ENCODE measurements at regions of chr17 and their contacts with region 1.

Region 1: GRCh38 chr17:78186692-78187595 is at the starts of genes AFMID and TK1:
- DNase-seq: peak; percentile 98 to 99 (median 98)
- ATAC-seq: peak; percentile 94
- H3K4me3 ChIP-seq: peak within 1 kb of the TSS; percentile 86
- H3K27ac ChIP-seq: peak within 1 kb of the TSS; percentile 89
- H3K4me1 ChIP-seq: peaks cover 22 to 54% of the 10 kb centered on the region in 2 experiments
- H3K27me3 ChIP-seq: no peaks in the 10 kb centered on the region
- CTCF ChIP-seq: peak; percentile 70 to 82 (median 77)
- EP300 ChIP-seq: no peak
- POLR2A ChIP-seq: peak; percentile 97
- RAD21 ChIP-seq: peak; percentile 25 to 28; a peak in 2 of 4 replicates
- polyA plus RNA-seq, gene AFMID: 80.3 to 188 TPM
- polyA plus RNA-seq, gene TK1: 8.4 to 29.9 TPM

Region 2: GRCh38 chr17:78089576-78090281 is 97.2 kb before region 1 on chr17:
- CTCF ChIA-PET with region 1: no interaction called
- POLR2A ChIA-PET with region 1: interaction called, 4 read pairs
- in situ Hi-C with region 1: no loop called
- intact Hi-C with region 1: loop called (anchors 5 kb)
- DNase-seq: no peak
- ATAC-seq: no peak
- H3K4me3 ChIP-seq: no peak overlapping the region
- H3K27ac ChIP-seq: no peak overlapping the region
- H3K4me1 ChIP-seq: peaks cover 2 to 6% of the 10 kb centered on the region in 2 experiments; a peak in 4 of 5 replicates
- H3K27me3 ChIP-seq: no peaks in the 10 kb centered on the region
- CTCF ChIP-seq: no peak
- EP300 ChIP-seq: no peak
- POLR2A ChIP-seq: no peak
- RAD21 ChIP-seq: no peak

Region 3: GRCh38 chr17:78140169-78140976 is 46.6 kb before region 1 on chr17:
- CTCF ChIA-PET with region 1: no interaction called
- POLR2A ChIA-PET with region 1: interaction called, 23 read pairs
- in situ Hi-C with region 1: no loop called
- intact Hi-C with region 1: loop called (anchors 5 kb)
- DNase-seq: peak; percentile 96 to 99 (median 98)
- ATAC-seq: peak; percentile 85
- H3K4me3 ChIP-seq: peak overlapping the region; percentile 44
- H3K27ac ChIP-seq: peak overlapping the region; percentile 79
- H3K4me1 ChIP-seq: peaks cover 75 to 99% of the 10 kb centered on the region in 2 experiments
- H3K27me3 ChIP-seq: no peaks in the 10 kb centered on the region
- CTCF ChIP-seq: no peak
- EP300 ChIP-seq: no peak
- POLR2A ChIP-seq: peak; percentile 80
- RAD21 ChIP-seq: no peak

Region 4: GRCh38 chr17:78176548-78177025 is 10.4 kb before region 1 on chr17:
- CTCF ChIA-PET with region 1: interaction called, 4 read pairs
- POLR2A ChIA-PET with region 1: interaction called, 27 read pairs
- in situ Hi-C with region 1: no loop called
- intact Hi-C with region 1: no loop called
- DNase-seq: peak; percentile 71 to 86 (median 76)
- ATAC-seq: peak; percentile 90
- H3K4me3 ChIP-seq: no peak overlapping the region
- H3K27ac ChIP-seq: peak overlapping the region; percentile 31; the same call in 1 of the 3 replicates
- H3K4me1 ChIP-seq: peaks cover 7 to 43% of the 10 kb centered on the region in 2 experiments
- H3K27me3 ChIP-seq: no peaks in the 10 kb centered on the region
- CTCF ChIP-seq: peak; percentile 92 to 97 (median 94)
- EP300 ChIP-seq: no peak
- POLR2A ChIP-seq: peak; percentile 53
- RAD21 ChIP-seq: peak; percentile 72 to 86

Region 5: DNA sequence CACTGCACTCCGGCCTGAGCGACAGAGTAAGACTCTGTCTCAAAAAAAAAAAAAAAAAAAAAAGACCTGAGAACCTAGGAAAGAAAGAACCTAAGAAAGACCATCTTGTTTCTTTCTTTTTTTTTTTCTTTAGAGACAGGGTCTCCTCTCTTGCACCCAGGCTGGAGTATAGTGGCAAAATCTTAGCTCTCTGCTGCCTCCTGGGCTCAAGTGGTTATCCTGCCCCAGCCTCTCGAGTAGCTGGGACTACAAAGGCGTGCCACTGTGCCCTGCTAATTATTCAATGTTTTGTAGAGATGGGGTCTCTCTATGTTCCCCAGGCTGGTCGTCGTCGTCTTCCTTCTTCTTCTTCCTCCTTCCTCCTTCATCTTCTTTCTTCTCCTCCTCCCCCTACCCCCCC is 19.4 kb after region 1 on chr17:
- CTCF ChIA-PET with region 1: no interaction called
- POLR2A ChIA-PET with region 1: interaction called, 25 read pairs
- in situ Hi-C with region 1: no loop called
- intact Hi-C with region 1: no loop called
- DNase-seq: no peak
- ATAC-seq: 0 out of 3 replicates have a peak, but pooled peaks have one; percentile 41
- H3K4me3 ChIP-seq: no peak overlapping the region
- H3K27ac ChIP-seq: no peak overlapping the region
- H3K4me1 ChIP-seq: peaks cover 0 to 6% of the 10 kb centered on the region in 2 experiments; a peak in 1 of 5 replicates
- H3K27me3 ChIP-seq: no peaks in the 10 kb centered on the region
- CTCF ChIP-seq: no peak
- EP300 ChIP-seq: no peak
- POLR2A ChIP-seq: no peak
- RAD21 ChIP-seq: no peak